ENCODE measurements at regions of chrX and their contacts with region 1.

Region 1: GRCh38 chrX:136452614-136453013 is 35.1 kb upstream of the BRS3 start:
- DNase-seq: no peak
- ATAC-seq: no peak
- H3K4me3 Mint-ChIP-seq: no peak overlapping the region
- H3K27ac Mint-ChIP-seq: no peak overlapping the region
- H3K4me1 Mint-ChIP-seq: no peaks in the 10 kb centered on the region
- H3K27me3 Mint-ChIP-seq: no peaks in the 10 kb centered on the region
- CTCF ChIP-seq: no peak

Region 2: GRCh38 chrX:136608295-136609171 is 155.9 kb after region 1 on chrX:
- CTCF ChIA-PET with region 1: no interaction called
- POLR2A ChIA-PET with region 1: no interaction called
- DNase-seq: peak; percentile 42
- ATAC-seq: peak; percentile 52
- H3K4me3 Mint-ChIP-seq: no peak overlapping the region
- H3K27ac Mint-ChIP-seq: no peak overlapping the region
- H3K4me1 Mint-ChIP-seq: no peaks in the 10 kb centered on the region
- H3K27me3 Mint-ChIP-seq: no peaks in the 10 kb centered on the region; the same call in 1 of the 2 replicates
- CTCF ChIP-seq: no peak

Region 3: GRCh38 chrX:136879001-136879687 is 426.5 kb after region 1 on chrX:
- CTCF ChIA-PET with region 1: no interaction called
- POLR2A ChIA-PET with region 1: interaction called, 11 read pairs
- DNase-seq: no peak
- ATAC-seq: no peak
- H3K4me3 Mint-ChIP-seq: peak overlapping the region; percentile 98
- H3K27ac Mint-ChIP-seq: peak overlapping the region; percentile 98
- H3K4me1 Mint-ChIP-seq: peaks cover 21% of the 10 kb centered on the region
- H3K27me3 Mint-ChIP-seq: no peaks in the 10 kb centered on the region
- CTCF ChIP-seq: no peak